GM23248 (cell line): ENCODE measurements at regions of chr4 and their contacts with region 1.

Region 1: GRCh38 chr4:28481603-28482002 is 1621.0 kb downstream of the STIM2 start:
- DNase-seq: no peak
- H3K4me3 ChIP-seq: no peak overlapping the region
- H3K27ac ChIP-seq: no peak overlapping the region
- H3K4me1 ChIP-seq: no peaks in the 10 kb centered on the region
- H3K27me3 ChIP-seq: no peaks in the 10 kb centered on the region

Region 2: DNA sequence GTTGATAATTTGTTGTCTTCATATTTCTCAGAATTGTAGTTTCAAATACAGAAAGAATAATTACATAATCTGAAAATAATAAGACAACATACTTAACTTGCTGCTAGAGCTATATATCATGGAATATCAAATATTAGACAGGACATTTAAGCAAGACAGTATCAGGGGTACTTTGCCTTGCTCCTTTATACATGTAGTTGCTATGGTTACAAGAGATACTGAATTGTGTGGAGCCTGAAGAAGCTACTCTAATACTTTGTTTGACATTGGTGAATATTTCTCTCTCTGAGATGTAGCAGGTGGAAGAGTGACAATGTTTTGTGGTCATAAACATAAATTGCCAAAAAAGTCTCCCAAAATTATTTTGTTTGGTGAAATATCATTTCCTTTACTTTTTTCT is 115.8 kb after region 1 on chr4:
- in situ Hi-C with region 1: loop called (anchors 25 kb)
- DNase-seq: no peak
- H3K4me3 ChIP-seq: no peak overlapping the region
- H3K27ac ChIP-seq: no peak overlapping the region
- H3K4me1 ChIP-seq: no peaks in the 10 kb centered on the region
- H3K27me3 ChIP-seq: no peaks in the 10 kb centered on the region